Natural killer cell (primary cell): ENCODE measurements at regions of chr10 and their contacts with region 1.

Region 1: GRCh38 chr10:92592761-92593618 is at the start of gene KIF11:
- DNase-seq: peak; percentile 97
- ATAC-seq: peak; percentile 82 to 93 (median 82)
- H3K4me3 ChIP-seq: peak within 1 kb of the TSS; percentile 61
- H3K4me3 Mint-ChIP-seq: peak within 1 kb of the TSS; percentile 99
- H3K27ac ChIP-seq: peak within 1 kb of the TSS; percentile 100
- H3K27ac Mint-ChIP-seq: peak within 1 kb of the TSS; percentile 99 to 100
- H3K4me1 ChIP-seq: peaks cover 21% of the 10 kb centered on the region
- H3K4me1 Mint-ChIP-seq: peaks cover 27 to 31% of the 10 kb centered on the region in 2 donors
- H3K27me3 ChIP-seq: no peaks in the 10 kb centered on the region
- H3K27me3 Mint-ChIP-seq: no peaks in the 10 kb centered on the region
- CTCF ChIP-seq: no peak
- total RNA-seq, gene KIF11: 1.3 to 2.4 (median 1.9) TPM

Region 2: DNA sequence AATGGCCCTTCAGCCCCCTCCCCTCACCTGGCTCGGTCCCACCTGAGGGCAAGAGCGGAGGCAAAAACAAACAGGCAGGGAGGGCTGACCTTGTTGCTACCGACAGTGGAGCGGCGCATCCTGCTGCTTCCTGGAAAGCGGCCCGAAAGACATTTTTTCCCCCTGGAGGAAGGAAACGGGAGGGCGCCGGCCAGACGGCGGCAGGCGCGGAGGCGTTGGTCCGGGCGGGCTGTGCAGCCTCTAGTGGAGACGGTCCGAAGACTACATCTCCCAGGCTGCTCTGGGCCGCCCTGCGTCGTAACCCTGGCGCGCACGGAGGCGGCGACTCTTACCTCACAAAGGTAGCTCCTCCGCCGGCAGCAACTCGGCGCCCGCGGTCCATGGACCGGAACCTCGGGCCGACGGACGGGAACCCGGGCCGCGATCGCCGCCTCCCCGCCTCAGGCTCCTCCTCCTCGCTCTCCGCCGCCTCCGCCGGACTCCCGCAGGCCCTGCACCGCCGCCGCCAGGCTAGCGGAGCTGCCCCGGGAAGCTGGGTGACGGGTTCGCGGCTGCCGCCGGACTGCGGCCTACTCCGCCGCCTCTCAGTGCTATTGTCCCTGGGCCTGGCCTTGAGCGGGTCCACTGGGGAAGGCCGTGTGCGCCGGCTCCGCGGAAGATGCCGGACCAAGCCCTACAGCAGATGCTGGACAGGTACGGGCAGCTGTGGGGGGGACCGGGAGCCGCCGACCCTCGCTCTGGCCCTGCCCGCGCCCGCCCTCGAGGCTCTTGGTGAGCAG is 302.0 kb before region 1 on chr10 and contains the starts of genes CPEB3 and MARCHF5:
- intact Hi-C with region 1: loop called (anchors 5 kb)
- DNase-seq: peak; percentile 87 to 95
- ATAC-seq: peak; percentile 93 to 99 (median 96)
- H3K4me3 ChIP-seq: peak within 1 kb of the TSS; percentile 85
- H3K4me3 Mint-ChIP-seq: peak within 1 kb of the TSS; percentile 95
- H3K27ac ChIP-seq: peak within 1 kb of the TSS; percentile 88
- H3K27ac Mint-ChIP-seq: peak within 1 kb of the TSS; percentile 84 to 91
- H3K4me1 ChIP-seq: peaks cover 15% of the 10 kb centered on the region
- H3K4me1 Mint-ChIP-seq: peaks cover 23 to 28% of the 10 kb centered on the region in 2 donors
- H3K27me3 ChIP-seq: no peaks in the 10 kb centered on the region
- H3K27me3 Mint-ChIP-seq: no peaks in the 10 kb centered on the region
- CTCF ChIP-seq: peak; percentile 31
- total RNA-seq, gene CPEB3: 3.6 to 6.9 (median 5.4) TPM
- total RNA-seq, gene MARCHF5: 28.0 to 38.6 (median 32.9) TPM

Region 3: GRCh38 chr10:92517034-92517655 is 75.8 kb before region 1 on chr10:
- intact Hi-C with region 1: loop called (anchors 5 kb)
- DNase-seq: peak; percentile 33 to 92
- ATAC-seq: peak; percentile 86 to 99 (median 95)
- H3K4me3 ChIP-seq: no peak overlapping the region
- H3K4me3 Mint-ChIP-seq: no peak overlapping the region
- H3K27ac ChIP-seq: no peak overlapping the region
- H3K27ac Mint-ChIP-seq: no peak overlapping the region
- H3K4me1 ChIP-seq: no peaks in the 10 kb centered on the region
- H3K4me1 Mint-ChIP-seq: peaks cover 0 to 5% of the 10 kb centered on the region in 2 donors
- H3K27me3 ChIP-seq: no peaks in the 10 kb centered on the region
- H3K27me3 Mint-ChIP-seq: no peaks in the 10 kb centered on the region
- CTCF ChIP-seq: peak; percentile 86

Region 4: DNA sequence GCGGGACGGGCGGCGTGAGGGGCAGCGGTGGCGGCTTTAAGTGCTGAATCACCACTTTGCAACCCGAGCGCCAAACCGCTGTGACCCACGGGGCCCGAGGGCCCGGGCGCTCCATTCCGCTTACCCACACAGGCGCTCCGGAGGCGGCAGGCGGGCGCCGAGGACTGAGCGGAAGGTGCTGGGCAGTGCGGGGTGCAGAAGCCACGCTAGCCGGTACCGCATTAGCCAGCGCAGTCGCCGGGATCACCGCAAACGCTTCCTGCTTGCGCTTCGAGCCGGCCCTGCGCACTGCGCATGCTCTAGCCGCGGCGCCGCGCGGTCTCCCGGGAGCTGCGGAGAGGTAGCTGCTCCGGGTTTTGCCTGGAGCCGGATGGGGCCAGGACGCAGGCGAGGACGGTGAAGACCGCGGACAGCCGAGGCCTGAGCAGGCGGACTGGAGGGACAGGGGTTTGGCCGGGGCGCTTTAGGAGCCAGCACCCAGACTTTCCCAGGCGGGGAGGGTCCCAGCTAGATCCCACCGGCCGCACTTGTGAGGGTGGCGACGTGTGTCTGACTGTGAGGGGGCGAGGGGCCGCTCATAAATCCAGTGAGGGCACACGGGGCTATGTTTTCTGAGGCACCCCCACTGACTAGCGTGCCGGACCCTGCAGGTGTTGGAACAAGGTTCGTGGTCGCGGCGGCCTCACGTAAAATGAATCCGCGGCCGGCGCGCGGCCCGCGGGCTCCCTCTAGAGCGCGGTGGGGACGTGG is 19.0 kb before region 1 on chr10 and contains the start of gene IDE:
- intact Hi-C with region 1: loop called (anchors 1 kb)
- DNase-seq: peak; percentile 77 to 89
- ATAC-seq: peak; percentile 73 to 88 (median 80)
- H3K4me3 ChIP-seq: peak within 1 kb of the TSS; percentile 98
- H3K4me3 Mint-ChIP-seq: peak within 1 kb of the TSS; percentile 76
- H3K27ac ChIP-seq: peak within 1 kb of the TSS; percentile 90
- H3K27ac Mint-ChIP-seq: peak within 1 kb of the TSS; percentile 82 to 92
- H3K4me1 ChIP-seq: peaks cover 11% of the 10 kb centered on the region
- H3K4me1 Mint-ChIP-seq: peaks cover 24 to 33% of the 10 kb centered on the region in 2 donors
- H3K27me3 ChIP-seq: no peaks in the 10 kb centered on the region
- H3K27me3 Mint-ChIP-seq: no peaks in the 10 kb centered on the region
- CTCF ChIP-seq: peak; percentile 72
- total RNA-seq, gene IDE: 18.2 to 23.5 (median 21.8) TPM

Region 5: DNA sequence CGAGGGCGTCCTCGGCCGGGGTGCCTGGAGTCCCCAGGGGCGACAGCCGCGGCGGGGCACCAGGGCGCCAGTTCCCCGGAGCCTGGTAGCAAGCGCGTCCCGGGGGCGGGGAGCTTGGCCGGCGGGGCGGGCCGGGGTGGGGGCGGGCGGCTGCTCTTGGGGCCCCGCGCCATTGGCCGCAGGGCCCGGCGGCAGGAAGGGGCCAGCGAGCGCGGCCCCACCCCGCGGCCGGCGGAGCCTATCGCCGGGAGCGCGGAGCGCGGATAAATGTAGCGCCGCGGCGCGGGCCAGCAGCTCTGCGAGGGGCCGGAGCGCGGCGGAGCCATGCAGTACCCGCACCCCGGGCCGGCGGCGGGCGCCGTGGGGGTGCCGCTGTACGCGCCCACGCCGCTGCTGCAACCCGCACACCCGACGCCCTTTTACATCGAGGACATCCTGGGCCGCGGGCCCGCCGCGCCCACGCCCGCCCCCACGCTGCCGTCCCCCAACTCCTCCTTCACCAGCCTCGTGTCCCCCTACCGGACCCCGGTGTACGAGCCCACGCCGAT is 96.7 kb after region 1 on chr10 and contains the start of gene HHEX:
- intact Hi-C with region 1: loop called (anchors 5 kb)
- DNase-seq: peak; percentile 55 to 63
- ATAC-seq: peak; percentile 65 to 85 (median 76)
- H3K4me3 ChIP-seq: peak within 1 kb of the TSS; percentile 72
- H3K4me3 Mint-ChIP-seq: peak within 1 kb of the TSS; percentile 92
- H3K27ac ChIP-seq: peak within 1 kb of the TSS; percentile 65
- H3K27ac Mint-ChIP-seq: peak within 1 kb of the TSS; percentile 82 to 92
- H3K4me1 ChIP-seq: peaks cover 30% of the 10 kb centered on the region
- H3K4me1 Mint-ChIP-seq: peaks cover 30 to 42% of the 10 kb centered on the region in 2 donors
- H3K27me3 ChIP-seq: peaks cover 11% of the 10 kb centered on the region
- H3K27me3 Mint-ChIP-seq: peaks cover 7 to 17% of the 10 kb centered on the region in 2 donors
- CTCF ChIP-seq: no peak
- total RNA-seq, gene HHEX: 19.5 to 24.0 (median 20.3) TPM

Region 6: DNA sequence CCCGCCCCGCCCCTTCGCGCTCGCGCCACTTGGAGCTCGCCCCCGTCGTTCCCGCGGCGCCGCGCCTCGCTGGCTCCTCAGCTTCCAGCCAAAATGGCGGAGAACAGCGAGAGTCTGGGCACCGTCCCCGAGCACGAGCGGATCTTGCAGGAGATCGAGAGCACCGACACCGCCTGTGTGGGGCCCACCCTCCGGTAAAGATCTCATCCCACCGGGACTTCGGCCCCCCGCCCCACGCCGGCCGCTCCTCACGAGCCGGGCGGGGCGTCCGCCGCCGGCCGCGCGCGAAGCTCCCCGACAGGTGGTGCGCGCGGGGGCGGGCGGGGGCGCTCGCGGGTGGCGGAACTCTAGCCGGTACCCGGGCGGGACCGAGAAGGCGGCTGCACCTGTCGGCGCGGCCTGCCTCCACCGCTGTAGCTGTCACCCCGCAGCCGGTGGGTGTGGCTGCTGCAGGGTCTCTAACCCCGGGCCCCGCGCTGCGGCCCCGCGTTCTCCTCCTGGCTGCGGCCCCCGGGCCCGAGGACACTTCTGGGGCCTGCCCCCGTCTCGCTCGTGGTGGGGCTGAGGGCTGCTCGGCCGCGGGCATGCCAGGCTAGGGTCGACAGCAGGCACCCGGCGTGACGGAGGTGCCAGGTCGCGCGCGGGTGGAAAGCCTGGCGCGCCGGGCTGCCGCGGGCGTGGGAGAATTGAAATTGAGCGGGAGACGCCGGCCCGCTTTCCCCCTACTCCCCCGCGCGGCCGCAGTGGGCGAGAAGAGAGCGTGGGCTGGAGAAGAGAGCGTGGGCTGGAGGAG is 255.6 kb after region 1 on chr10 and contains the start of gene EXOC6:
- intact Hi-C with region 1: loop called (anchors 2 kb)
- DNase-seq: peak; percentile 84 to 94
- ATAC-seq: peak; percentile 82 to 92 (median 83)
- H3K4me3 ChIP-seq: peak within 1 kb of the TSS; percentile 76
- H3K4me3 Mint-ChIP-seq: peak within 1 kb of the TSS; percentile 91
- H3K27ac ChIP-seq: peak within 1 kb of the TSS; percentile 94
- H3K27ac Mint-ChIP-seq: peak within 1 kb of the TSS; percentile 80 to 89
- H3K4me1 ChIP-seq: peaks cover 14% of the 10 kb centered on the region
- H3K4me1 Mint-ChIP-seq: peaks cover 20 to 24% of the 10 kb centered on the region in 2 donors
- H3K27me3 ChIP-seq: no peaks in the 10 kb centered on the region
- H3K27me3 Mint-ChIP-seq: no peaks in the 10 kb centered on the region
- CTCF ChIP-seq: peak; percentile 26
- total RNA-seq, gene EXOC6: 12.1 to 18.2 (median 16.1) TPM

Region 7: GRCh38 chr10:93657757-93658156 is 1064.8 kb after region 1 on chr10:
- intact Hi-C with region 1: no loop called
- DNase-seq: no peak
- ATAC-seq: no peak
- H3K4me3 ChIP-seq: no peak overlapping the region
- H3K4me3 Mint-ChIP-seq: no peak overlapping the region
- H3K27ac ChIP-seq: no peak overlapping the region
- H3K27ac Mint-ChIP-seq: no peak overlapping the region
- H3K4me1 ChIP-seq: no peaks in the 10 kb centered on the region
- H3K4me1 Mint-ChIP-seq: no peaks in the 10 kb centered on the region
- H3K27me3 ChIP-seq: no peaks in the 10 kb centered on the region
- H3K27me3 Mint-ChIP-seq: no peaks in the 10 kb centered on the region
- CTCF ChIP-seq: no peak